Activated CD4-positive, alpha-beta memory T cell treated with anti-CD3 and anti-CD28 coated beads, Interleukin-2, amount 10 ng/mL, durations not matched to agents 7 days and 5 days (primary cell): ENCODE measurements at regions of chr10 and their contacts with region 1.

Region 1: GRCh38 chr10:62183442-62183841 is 85.2 kb downstream of the RTKN2 start:
- DNase-seq: peak; percentile 49
- H3K4me3 Mint-ChIP-seq: peak overlapping the region; percentile 9
- H3K27ac Mint-ChIP-seq: peak overlapping the region; percentile 91
- H3K4me1 Mint-ChIP-seq: peaks cover 84% of the 10 kb centered on the region
- H3K27me3 Mint-ChIP-seq: no peaks in the 10 kb centered on the region

Region 2: DNA sequence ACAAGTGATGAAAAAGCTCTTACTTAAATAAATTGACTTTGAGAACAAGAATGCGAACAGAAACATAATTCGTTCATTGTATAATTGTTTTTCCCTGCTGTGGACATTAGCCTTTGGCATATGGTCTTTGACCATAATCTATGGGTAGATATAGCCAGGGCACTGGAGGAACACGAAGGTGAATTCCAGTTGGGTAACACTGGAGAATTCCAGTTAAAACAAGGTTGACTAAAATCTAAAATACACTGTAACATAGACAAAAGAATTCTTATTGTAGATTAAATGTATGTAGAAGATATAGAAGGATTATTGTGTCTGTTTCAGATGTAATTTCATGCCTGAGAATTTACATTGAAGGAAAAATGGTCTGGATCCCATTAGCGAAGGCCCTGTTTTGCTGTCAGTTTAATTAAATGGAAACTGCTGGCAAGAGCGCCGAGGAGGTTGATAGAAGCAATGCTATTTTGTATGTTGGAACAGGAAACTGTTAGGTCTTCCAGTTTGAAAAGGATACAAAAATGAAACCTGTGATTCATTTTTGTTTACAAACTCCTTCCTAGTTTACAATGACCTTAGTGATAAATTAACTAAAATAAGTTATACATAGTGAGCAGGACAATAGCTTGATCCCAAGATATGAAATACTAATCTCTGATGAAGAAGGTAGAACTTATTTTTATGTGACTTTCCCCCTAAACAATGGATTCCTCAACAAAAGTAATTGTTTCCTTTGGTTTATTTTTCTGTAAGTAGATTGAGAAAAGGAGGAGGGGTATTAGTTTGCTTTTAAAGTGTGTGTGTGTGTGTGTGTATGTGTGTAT is 213.1 kb before region 1 on chr10:
- CTCF ChIA-PET with region 1: no interaction called
- POLR2A ChIA-PET with region 1: no interaction called
- DNase-seq: no peak
- H3K4me3 Mint-ChIP-seq: no peak overlapping the region
- H3K27ac Mint-ChIP-seq: peak overlapping the region; percentile 52
- H3K4me1 Mint-ChIP-seq: peaks cover 69% of the 10 kb centered on the region
- H3K27me3 Mint-ChIP-seq: no peaks in the 10 kb centered on the region

Region 3: DNA sequence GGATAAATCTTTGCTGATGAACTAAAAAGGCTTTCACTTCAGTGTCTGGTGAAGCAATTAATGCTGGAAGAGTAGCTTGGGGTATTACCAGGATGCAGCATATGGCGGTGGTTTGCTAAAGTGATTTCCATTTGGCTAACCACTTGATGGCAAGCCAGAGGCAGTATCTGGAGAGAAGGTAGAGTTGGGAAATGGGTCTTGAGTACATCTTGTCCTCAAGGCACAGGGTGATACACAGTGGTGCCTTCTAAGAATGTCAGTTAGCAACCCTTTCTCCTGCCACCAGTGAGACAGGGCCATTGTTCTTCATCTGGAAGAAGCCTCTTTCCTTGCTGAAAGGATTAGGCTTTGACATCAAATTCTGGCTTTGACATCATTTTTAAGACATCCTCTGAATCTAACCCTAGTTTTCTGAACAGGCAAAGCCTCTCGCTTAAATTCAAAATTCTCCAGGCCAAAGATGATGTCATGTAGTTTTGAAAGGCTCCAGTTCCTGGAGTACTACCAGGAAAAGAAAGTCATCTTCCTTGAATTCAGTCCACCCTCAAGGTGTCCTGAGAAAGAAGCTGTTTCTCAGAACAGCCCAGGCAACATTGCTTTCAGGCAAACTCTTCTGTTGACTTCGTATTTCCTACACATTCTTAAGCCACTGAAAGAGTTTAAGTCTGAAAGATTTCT is 119.5 kb before region 1 on chr10:
- CTCF ChIA-PET with region 1: interaction called, 3 read pairs
- POLR2A ChIA-PET with region 1: interaction called, 446 read pairs
- DNase-seq: no peak
- H3K4me3 Mint-ChIP-seq: peak overlapping the region; percentile 36
- H3K27ac Mint-ChIP-seq: peak overlapping the region; percentile 89
- H3K4me1 Mint-ChIP-seq: peaks cover 88% of the 10 kb centered on the region
- H3K27me3 Mint-ChIP-seq: no peaks in the 10 kb centered on the region

Region 4: GRCh38 chr10:62121187-62121530 is 62.3 kb before region 1 on chr10:
- CTCF ChIA-PET with region 1: no interaction called
- POLR2A ChIA-PET with region 1: interaction called, 15 read pairs
- DNase-seq: no peak
- H3K4me3 Mint-ChIP-seq: peak overlapping the region; percentile 9
- H3K27ac Mint-ChIP-seq: peak overlapping the region; percentile 82
- H3K4me1 Mint-ChIP-seq: peaks cover 47% of the 10 kb centered on the region
- H3K27me3 Mint-ChIP-seq: no peaks in the 10 kb centered on the region

Region 5: DNA sequence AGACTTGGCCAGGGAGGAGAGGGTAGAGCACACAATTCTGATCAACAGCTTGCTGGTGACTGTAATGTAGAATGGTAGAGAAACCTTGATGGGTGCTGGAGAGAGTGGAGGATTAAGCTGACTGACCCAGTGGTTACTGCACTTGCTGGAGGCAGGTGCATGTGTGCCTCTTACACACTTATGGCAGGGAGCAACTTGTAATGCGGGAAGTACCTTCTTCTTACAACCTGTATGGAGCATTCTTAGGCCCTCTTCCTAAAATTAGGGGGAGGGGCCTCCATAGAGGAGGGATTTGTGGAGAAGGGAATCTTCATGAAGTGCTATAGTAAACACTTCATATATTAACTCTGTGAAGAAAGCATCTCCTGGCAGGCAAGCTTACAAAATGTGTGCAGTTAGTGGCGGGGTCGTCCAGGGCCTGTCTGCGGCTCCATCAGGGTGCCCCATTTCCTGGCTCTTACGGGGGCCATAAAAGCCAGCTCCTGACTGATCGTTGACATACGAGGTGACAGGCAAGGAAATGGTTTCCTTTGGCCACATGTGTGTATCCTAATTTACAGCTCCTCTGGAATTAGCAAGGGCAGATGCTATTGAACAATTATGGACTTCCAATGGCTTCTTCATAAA is 28.3 kb before region 1 on chr10:
- CTCF ChIA-PET with region 1: no interaction called
- POLR2A ChIA-PET with region 1: no interaction called
- DNase-seq: no peak
- H3K4me3 Mint-ChIP-seq: no peak overlapping the region
- H3K27ac Mint-ChIP-seq: no peak overlapping the region
- H3K4me1 Mint-ChIP-seq: no peaks in the 10 kb centered on the region
- H3K27me3 Mint-ChIP-seq: no peaks in the 10 kb centered on the region

Region 6: DNA sequence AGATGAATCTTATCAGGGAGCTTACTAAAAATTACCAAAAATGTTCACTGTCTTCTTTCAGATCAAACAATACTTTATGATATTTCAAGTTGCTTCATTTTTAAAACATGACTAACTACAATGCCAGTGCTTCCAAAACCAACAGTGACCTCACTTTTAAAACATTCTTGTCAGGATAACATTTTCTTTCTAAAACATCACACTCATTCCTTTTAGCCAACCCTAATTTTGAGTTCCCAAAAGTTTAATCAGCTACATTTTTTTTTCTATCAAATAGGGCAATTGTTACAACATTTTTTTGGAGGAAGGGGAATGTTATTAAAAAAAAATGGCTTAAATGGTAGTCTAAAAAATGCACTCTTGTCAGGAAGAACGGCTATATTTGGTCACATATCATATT is 47.9 kb after region 1 on chr10:
- CTCF ChIA-PET with region 1: no interaction called
- POLR2A ChIA-PET with region 1: interaction called, 10 read pairs
- DNase-seq: no peak
- H3K4me3 Mint-ChIP-seq: no peak overlapping the region
- H3K27ac Mint-ChIP-seq: no peak overlapping the region
- H3K4me1 Mint-ChIP-seq: peaks cover 3% of the 10 kb centered on the region
- H3K27me3 Mint-ChIP-seq: no peaks in the 10 kb centered on the region

Region 7: GRCh38 chr10:62278441-62278910 is 95.0 kb after region 1 on chr10:
- CTCF ChIA-PET with region 1: no interaction called
- POLR2A ChIA-PET with region 1: no interaction called
- DNase-seq: no peak
- H3K4me3 Mint-ChIP-seq: no peak overlapping the region
- H3K27ac Mint-ChIP-seq: no peak overlapping the region
- H3K4me1 Mint-ChIP-seq: no peaks in the 10 kb centered on the region
- H3K27me3 Mint-ChIP-seq: peaks cover 1% of the 10 kb centered on the region

Region 8: DNA sequence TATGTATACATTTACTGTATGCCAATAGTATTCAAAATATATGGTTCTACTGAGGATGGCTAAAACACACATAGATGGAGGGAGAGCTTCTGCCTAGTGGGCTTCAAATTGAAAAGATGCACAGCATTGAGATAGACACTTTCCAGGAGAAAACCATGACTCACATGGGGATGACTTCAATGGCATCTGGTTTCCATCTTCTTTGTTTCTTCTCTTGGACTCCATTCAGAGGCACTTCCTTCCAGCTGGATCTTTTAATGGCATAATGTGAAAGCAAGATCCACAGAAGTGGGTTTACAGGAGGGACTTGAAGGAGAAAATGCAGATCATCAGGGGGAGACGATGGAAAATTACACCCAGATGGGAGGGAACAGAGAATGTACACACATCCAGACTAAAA is 275.6 kb after region 1 on chr10:
- CTCF ChIA-PET with region 1: no interaction called
- POLR2A ChIA-PET with region 1: no interaction called
- DNase-seq: no peak
- H3K4me3 Mint-ChIP-seq: no peak overlapping the region
- H3K27ac Mint-ChIP-seq: no peak overlapping the region
- H3K4me1 Mint-ChIP-seq: peaks cover 32% of the 10 kb centered on the region
- H3K27me3 Mint-ChIP-seq: no peaks in the 10 kb centered on the region